ENCODE measurements at regions of chr11 and their contacts with region 1.

Region 1: DNA sequence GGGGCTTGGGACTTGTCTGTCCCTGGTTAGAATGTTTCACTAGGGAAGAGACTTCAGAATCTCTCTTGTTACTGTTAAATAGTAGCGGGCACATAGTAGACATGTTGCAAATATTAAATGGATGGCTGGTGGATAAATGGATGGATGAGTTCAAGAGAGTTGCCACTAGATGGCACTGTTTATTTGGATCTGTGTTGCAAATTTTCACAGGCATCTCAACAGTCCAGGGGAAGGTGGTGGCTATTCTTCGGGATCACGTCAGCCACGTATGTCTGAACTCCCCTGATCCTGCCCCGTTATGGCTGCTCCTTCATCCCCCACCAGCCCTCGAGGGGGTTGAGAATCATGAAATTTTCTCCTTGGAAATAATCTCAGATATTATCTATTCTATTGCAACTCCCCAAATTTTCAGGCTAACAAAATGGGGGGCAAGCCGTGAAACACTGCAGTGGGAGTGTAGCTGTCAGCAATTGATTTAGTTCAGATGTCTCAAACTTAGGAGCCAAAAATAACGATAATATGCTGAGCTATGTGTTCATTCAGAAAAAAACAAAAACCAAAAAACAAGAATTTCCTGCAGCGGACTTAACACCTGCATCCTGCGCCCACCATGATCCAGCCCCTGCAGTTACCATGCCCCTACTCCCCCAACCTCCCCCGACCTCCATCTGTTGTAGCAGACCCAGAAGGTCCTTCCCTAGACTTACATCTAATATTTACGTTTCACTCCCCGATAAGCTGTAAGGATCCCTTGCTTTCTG is 29.1 kb upstream of the BIRC3 start:
- DNase-seq: peak in 4 of 10 donors; percentile 18 to 81 (median 29)

Region 2: DNA sequence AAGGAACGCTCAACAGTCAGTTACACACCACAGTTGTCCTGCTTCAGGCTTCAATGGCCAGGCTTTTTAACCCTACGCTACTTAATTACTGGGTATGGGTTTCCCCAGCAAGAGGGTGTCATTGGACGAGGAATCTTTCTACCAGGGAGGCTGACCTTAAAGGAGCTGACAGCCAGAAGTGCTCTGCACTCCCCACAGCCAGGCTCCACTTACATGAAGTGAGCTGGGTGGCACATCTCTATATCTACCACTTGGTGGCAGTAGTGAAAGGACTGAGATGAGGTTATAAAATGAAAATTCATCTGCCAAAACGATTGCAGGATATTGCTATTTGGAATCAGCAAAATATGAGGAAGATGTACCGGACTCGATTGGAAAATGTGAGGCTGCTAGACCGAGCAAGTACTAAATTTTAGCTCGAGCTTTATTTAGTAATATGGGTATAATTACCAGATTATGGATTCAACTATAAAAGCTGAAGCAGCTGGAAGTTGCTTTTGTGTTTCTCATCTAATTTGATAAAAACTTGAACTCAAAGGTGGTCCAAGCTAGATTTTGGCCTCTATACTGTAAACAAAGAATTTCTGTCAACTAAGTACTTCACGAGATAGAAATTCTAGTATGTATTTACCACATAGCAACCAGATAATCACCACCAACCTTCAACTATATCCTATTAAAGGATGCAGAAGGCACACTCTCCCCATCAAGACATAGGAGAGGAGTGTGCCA is 427.3 kb before region 1 on chr11:
- intact Hi-C with region 1: no loop called
- DNase-seq: peak in 4 of 10 donors; percentile 3 to 20 (median 11)

Region 3: DNA sequence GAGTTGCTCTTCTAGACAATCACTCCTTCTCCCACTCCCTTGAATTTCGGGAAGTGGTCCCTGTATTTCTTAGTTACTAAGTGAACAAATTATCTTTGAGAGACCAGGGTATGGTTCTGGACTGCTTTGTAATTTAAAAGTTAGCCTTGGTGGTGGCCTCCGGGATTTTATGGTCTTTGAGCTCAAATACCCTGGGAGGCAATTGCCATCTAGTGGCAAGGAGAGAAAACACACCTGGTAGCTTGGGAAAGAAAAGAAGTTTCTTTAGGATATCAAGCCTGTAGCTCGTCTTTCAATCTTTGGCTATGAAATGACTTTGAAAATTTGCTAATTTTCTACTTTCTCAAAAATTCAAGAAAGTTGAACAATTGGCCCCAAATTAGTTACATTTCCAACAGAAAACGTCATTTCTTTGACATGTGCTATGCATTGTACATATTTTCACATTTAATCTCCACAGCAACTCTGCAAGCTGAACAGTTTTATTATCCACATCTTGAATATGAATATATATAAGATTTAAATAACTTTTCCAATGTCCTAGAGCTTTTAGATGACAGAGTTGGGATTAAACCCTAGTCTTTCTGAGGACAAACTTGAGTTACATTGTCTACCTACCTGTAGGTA is 378.3 kb after region 1 on chr11:
- intact Hi-C with region 1: loop called (anchors 5 kb)
- DNase-seq: peak in 1 of 10 donors; percentile 17